HCT116 (cell line): ENCODE measurements at regions of chr1 and their contacts with region 1.

Region 1: DNA sequence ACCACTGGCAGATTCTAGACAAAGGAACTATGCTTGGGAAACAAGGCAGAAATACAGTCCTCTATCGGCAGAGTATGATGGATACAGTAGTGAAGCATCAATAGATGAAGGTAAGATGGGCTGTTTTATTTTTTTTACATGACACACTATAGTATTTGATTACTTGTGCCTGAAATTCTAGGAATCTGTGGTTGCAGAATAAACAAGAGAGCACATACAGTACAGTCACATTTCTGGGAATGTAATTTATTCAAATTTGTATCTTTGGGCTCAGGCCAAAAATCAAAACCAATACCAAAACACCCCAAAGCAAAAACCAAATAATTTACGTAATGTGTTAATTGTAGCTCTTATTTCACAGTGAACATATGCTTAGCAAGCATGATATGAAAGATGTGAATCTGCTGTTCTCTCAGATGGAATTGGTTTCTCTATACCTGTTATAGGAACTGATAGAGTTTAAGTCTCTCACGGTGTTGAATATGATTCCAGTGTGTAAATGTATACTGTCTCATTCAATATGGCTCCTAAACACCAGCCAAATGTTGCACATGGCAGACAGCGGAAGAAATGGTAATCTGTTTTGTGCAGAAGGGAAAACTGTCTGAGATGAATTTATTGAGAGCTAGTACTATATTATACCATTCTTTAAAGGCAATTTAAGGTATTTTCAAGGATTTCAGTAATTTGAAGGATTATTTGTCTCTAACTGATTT is 83.3 kb downstream of the SYT14 start:
- DNase-seq: no peak
- ATAC-seq: no peak
- H3K4me3 ChIP-seq: no peak overlapping the region
- H3K27ac ChIP-seq: no peak overlapping the region
- H3K4me1 ChIP-seq: no peaks in the 10 kb centered on the region
- H3K27me3 ChIP-seq: peaks cover 38% of the 10 kb centered on the region
- CTCF ChIP-seq: no peak
- POLR2A ChIP-seq: no peak
- RAD21 ChIP-seq: no peak

Region 2: GRCh38 chr1:210132582-210132981 is 111.3 kb after region 1 on chr1:
- CTCF ChIA-PET with region 1: no interaction called
- POLR2A ChIA-PET with region 1: no interaction called
- RAD21 ChIA-PET with region 1: no interaction called
- intact Hi-C with region 1: loop called (anchors 5 kb)
- DNase-seq: no peak
- ATAC-seq: no peak
- H3K4me3 ChIP-seq: no peak overlapping the region
- H3K27ac ChIP-seq: no peak overlapping the region
- H3K4me1 ChIP-seq: no peaks in the 10 kb centered on the region
- H3K27me3 ChIP-seq: peaks cover 31% of the 10 kb centered on the region
- CTCF ChIP-seq: no peak
- POLR2A ChIP-seq: no peak
- RAD21 ChIP-seq: no peak